Caco-2 (cell line): ENCODE measurements at regions of chr4 and their contacts with region 1.

Region 1: DNA sequence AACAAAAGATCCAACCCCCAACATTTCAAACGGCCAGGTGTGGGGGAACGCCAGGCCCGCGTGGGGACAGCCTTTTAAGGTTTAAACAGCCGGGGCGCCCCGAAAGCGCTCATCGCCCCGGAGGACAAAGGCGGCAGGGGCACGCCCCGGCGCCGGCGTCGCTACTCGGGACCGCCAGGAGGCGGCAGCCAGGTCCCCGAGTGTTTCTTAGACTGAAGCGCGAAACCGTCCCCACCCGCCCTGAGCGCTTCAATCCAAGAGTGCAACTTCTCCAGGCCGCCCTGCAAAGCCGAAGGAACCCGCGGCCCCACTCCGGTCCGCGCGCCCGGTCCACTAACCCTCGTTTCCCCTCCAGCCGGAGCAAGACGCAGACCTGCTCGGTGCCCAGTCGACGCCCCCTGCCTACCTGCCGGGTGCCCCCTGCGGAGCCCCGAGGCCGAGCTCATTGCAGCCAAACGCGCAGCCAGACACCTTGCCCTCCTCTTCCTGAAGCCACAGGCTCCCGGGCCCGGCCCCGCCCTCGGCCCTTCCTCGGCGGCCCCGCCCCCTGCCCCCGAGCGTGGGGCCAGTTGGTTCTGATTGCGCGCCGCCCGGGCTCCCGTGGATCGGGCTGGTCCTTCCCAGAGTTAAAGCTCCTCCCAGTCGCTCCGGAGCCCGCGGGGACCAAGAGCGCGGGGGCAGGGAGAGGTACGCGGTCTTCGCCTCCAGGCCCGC is at the start of gene CASP6:
- DNase-seq: peak; percentile 80 to 85
- H3K4me3 ChIP-seq: peak within 1 kb of the TSS; percentile 91
- H3K4me3 Mint-ChIP-seq: peak within 1 kb of the TSS; percentile 83
- H3K27ac Mint-ChIP-seq: peak within 1 kb of the TSS; percentile 90
- H3K4me1 ChIP-seq: peaks cover 22% of the 10 kb centered on the region
- H3K4me1 Mint-ChIP-seq: peaks cover 22% of the 10 kb centered on the region
- H3K27me3 ChIP-seq: no peaks in the 10 kb centered on the region
- H3K27me3 Mint-ChIP-seq: no peaks in the 10 kb centered on the region
- CTCF ChIP-seq: peak; percentile 37 to 68
- total RNA-seq, gene CASP6: 35.9 and 36.7 TPM in 2 replicates

Region 2: DNA sequence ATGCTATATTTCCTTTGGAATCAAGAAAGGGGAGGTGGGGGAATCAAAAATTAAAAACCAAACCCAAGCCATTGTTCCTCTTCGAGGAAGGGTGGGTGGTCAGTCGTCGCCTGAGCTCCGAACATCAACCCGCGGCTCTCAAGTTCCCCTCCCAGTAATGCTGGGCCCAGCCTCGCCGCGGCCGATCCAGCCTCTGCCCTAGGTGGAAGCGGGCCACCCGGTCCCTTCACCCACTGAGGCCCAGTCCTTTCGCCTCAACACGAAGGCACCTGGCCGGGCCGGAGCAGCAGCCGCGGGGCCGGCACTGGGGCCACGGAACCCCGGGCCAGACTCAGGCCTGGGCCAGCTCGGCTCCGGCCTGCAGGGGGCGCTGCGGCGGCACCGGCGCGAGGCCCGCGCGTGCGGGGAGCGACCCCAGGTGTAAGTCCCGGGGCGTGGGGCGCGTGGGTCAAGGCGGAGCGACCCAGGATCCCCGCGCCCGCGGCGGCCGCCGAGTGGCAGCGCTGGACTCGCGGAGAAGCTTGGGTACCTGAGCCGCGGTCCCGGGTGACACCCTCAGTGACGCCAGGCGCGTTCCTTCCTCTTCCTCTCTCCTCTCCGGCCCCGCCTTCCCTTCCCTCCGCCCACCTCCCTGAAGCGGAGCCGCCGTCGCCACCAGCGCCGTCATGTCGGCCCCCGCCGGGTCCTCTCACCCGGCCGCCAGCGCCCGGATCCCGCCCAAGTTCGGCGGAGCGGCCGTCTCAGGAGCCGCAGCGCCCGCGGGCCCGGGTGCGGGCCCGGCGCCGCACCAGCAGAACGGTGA is 269.7 kb before region 1 on chr4 and contains the start of gene SEC24B:
- CTCF ChIA-PET with region 1: interaction called, 4 read pairs
- POLR2A ChIA-PET with region 1: no interaction called
- intact Hi-C with region 1: loop called (anchors 5 kb)
- DNase-seq: peak; percentile 86 to 87
- H3K4me3 ChIP-seq: peak within 1 kb of the TSS; percentile 85
- H3K4me3 Mint-ChIP-seq: peak within 1 kb of the TSS; percentile 77
- H3K27ac Mint-ChIP-seq: peak within 1 kb of the TSS; percentile 57
- H3K4me1 ChIP-seq: peaks cover 20% of the 10 kb centered on the region
- H3K4me1 Mint-ChIP-seq: peaks cover 14% of the 10 kb centered on the region
- H3K27me3 ChIP-seq: no peaks in the 10 kb centered on the region
- H3K27me3 Mint-ChIP-seq: no peaks in the 10 kb centered on the region
- CTCF ChIP-seq: peak; percentile 42 to 84
- total RNA-seq, gene SEC24B: 29.0 and 29.5 TPM in 2 replicates

Region 3: GRCh38 chr4:109719604-109720003 is 16.5 kb after region 1 on chr4:
- CTCF ChIA-PET with region 1: no interaction called
- POLR2A ChIA-PET with region 1: no interaction called
- intact Hi-C with region 1: no loop called
- DNase-seq: no peak
- H3K4me3 ChIP-seq: no peak overlapping the region
- H3K4me3 Mint-ChIP-seq: no peak overlapping the region
- H3K27ac Mint-ChIP-seq: no peak overlapping the region
- H3K4me1 ChIP-seq: no peaks in the 10 kb centered on the region
- H3K4me1 Mint-ChIP-seq: no peaks in the 10 kb centered on the region
- H3K27me3 ChIP-seq: no peaks in the 10 kb centered on the region
- H3K27me3 Mint-ChIP-seq: no peaks in the 10 kb centered on the region
- CTCF ChIP-seq: no peak

Region 4: GRCh38 chr4:109729718-109730618 is 26.9 kb after region 1 on chr4 and contains the start of gene PLA2G12A:
- CTCF ChIA-PET with region 1: interaction called, 3 read pairs
- POLR2A ChIA-PET with region 1: interaction called, 5 read pairs
- intact Hi-C with region 1: loop called (anchors 1 kb)
- DNase-seq: peak; percentile 93
- H3K4me3 ChIP-seq: peak within 1 kb of the TSS; percentile 65
- H3K4me3 Mint-ChIP-seq: peak within 1 kb of the TSS; percentile 86
- H3K27ac Mint-ChIP-seq: peak within 1 kb of the TSS; percentile 84
- H3K4me1 ChIP-seq: 0 out of 2 replicates have a peak, but pooled peaks cover 5% of the 10 kb centered on the region
- H3K4me1 Mint-ChIP-seq: peaks cover 9% of the 10 kb centered on the region
- H3K27me3 ChIP-seq: no peaks in the 10 kb centered on the region
- H3K27me3 Mint-ChIP-seq: peaks cover 3% of the 10 kb centered on the region
- CTCF ChIP-seq: no peak
- total RNA-seq, gene PLA2G12A: 34.1 and 47.8 TPM in 2 replicates

Region 5: DNA sequence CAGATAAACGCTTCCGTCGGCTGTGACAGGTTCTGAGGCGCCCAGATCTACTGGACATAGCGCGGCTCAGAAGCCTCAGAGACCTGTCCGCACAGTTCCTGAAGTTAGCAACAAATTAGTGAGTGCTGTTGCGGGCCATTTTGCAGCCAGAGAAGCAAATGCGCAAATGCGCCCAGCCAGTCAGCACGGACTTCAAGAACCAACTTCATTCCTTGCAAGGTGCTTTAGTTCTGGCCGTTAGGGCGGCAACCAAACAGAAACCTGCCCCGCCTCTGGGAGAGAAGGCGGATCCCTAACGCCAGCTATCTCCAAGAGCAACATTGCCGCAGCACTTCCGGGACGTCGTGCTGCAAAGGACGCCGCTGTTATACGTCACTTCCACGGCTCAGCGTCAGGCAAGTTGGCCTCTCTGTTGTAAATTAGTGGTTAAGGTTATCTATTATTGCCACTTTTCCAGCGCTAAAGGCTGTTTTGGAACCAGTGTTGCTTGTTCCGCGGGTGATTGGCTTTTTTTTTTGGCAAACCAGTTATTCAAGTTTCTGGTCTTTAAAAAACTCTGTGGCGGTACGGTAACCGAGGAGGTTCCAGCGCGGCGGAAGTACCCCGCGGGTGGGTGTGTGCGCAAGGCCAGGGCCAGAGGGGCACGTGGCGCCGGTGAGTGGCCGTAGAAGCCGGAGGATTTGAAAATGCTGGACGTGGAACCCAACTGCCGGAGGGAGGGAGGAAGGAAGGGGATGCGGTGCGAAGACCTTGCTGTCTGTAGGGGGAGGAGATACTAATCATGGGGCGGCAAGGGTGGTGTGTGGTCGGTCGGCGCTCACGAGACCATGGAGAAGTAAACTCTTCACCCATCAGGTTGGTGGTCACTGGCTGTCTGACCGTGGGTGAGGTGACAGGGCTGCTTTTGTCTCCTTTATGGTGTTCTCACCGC is 112.3 kb after region 1 on chr4 and contains the start of gene GAR1:
- CTCF ChIA-PET with region 1: no interaction called
- POLR2A ChIA-PET with region 1: no interaction called
- intact Hi-C with region 1: loop called (anchors 5 kb)
- DNase-seq: peak; percentile 88 to 92
- H3K4me3 ChIP-seq: peak within 1 kb of the TSS; percentile 88
- H3K4me3 Mint-ChIP-seq: peak within 1 kb of the TSS; percentile 90
- H3K27ac Mint-ChIP-seq: peak within 1 kb of the TSS; percentile 97
- H3K4me1 ChIP-seq: no peaks in the 10 kb centered on the region; the same call in 1 of the 2 replicates
- H3K4me1 Mint-ChIP-seq: peaks cover 23% of the 10 kb centered on the region
- H3K27me3 ChIP-seq: no peaks in the 10 kb centered on the region
- H3K27me3 Mint-ChIP-seq: peaks cover 2% of the 10 kb centered on the region
- CTCF ChIP-seq: no peak
- total RNA-seq, gene GAR1: 30.8 and 31.6 TPM in 2 replicates

Region 6: DNA sequence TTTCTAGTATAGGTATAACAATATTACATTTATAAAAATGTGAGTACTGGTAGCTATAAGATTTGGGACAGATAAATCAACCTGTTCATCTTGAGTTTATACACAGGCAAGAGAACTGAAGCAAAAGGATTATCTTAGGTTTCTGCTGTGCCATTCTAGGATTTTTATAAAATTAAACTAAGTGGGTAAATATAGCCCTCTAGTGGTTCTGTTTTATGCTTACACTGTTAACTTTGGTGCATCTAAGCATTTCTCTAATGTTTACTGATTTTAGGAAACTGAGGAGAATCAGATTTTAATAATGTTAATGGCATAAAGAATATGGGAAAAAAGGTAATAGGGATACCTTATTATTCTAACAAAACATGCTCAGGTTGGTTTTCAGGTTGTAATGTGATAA is 123.6 kb after region 1 on chr4:
- CTCF ChIA-PET with region 1: no interaction called
- POLR2A ChIA-PET with region 1: no interaction called
- intact Hi-C with region 1: loop called (anchors 1 kb)
- DNase-seq: no peak
- H3K4me3 ChIP-seq: no peak overlapping the region
- H3K4me3 Mint-ChIP-seq: no peak overlapping the region
- H3K27ac Mint-ChIP-seq: no peak overlapping the region
- H3K4me1 ChIP-seq: no peaks in the 10 kb centered on the region
- H3K4me1 Mint-ChIP-seq: no peaks in the 10 kb centered on the region
- H3K27me3 ChIP-seq: no peaks in the 10 kb centered on the region
- H3K27me3 Mint-ChIP-seq: no peaks in the 10 kb centered on the region
- CTCF ChIP-seq: peak; percentile 38 to 41

Region 7: GRCh38 chr4:109972786-109973528 is 269.9 kb after region 1 on chr4:
- CTCF ChIA-PET with region 1: no interaction called
- POLR2A ChIA-PET with region 1: no interaction called
- intact Hi-C with region 1: loop called (anchors 2 kb)
- DNase-seq: peak; percentile 63 to 76
- H3K4me3 ChIP-seq: no peak overlapping the region; the same call in 1 of the 2 replicates
- H3K4me3 Mint-ChIP-seq: peak overlapping the region; percentile 64
- H3K27ac Mint-ChIP-seq: peak overlapping the region; percentile 65
- H3K4me1 ChIP-seq: peaks cover 28% of the 10 kb centered on the region; the same call in 1 of the 2 replicates
- H3K4me1 Mint-ChIP-seq: peaks cover 26% of the 10 kb centered on the region
- H3K27me3 ChIP-seq: no peaks in the 10 kb centered on the region
- H3K27me3 Mint-ChIP-seq: no peaks in the 10 kb centered on the region
- CTCF ChIP-seq: peak in 1 of 2 experiments; percentile 30